AG04450 (cell line): ENCODE measurements at regions of chr4 and their contacts with region 1.

Region 1: DNA sequence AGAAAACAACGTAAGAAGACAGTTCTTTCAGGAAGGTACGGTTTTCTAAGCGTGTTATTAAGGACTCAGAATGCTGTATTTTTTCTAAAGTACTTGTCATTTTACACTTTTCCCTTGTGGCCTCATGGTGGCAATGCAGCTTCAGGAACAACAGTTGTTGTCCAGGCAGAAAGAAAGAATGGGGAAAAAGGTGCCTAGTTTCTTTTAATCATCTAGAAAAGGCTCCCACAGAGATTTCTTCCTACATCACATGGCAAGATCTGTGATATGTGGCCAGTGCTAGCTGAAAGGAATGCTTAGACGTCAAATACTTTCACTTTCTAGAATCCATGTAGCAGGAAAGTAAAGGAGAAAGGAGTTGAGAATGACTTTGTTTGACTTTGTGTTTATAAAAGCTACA is 49.0 kb upstream of the TRAM1L1 start:
- DNase-seq: peak; percentile 60
- H3K4me3 ChIP-seq: no peak overlapping the region; the same call in 1 of the 2 replicates
- H3K27ac ChIP-seq: no peak overlapping the region
- H3K27me3 ChIP-seq: no peaks in the 10 kb centered on the region
- CTCF ChIP-seq: peak; percentile 70

Region 2: GRCh38 chr4:117264072-117264471 is 129.7 kb after region 1 on chr4:
- CTCF ChIA-PET with region 1: no interaction called
- POLR2A ChIA-PET with region 1: no interaction called
- DNase-seq: no peak
- H3K4me3 ChIP-seq: no peak overlapping the region
- H3K27ac ChIP-seq: no peak overlapping the region
- H3K27me3 ChIP-seq: no peaks in the 10 kb centered on the region
- CTCF ChIP-seq: no peak

Region 3: GRCh38 chr4:117560329-117560728 is 425.9 kb after region 1 on chr4:
- CTCF ChIA-PET with region 1: interaction called, 24 read pairs
- POLR2A ChIA-PET with region 1: no interaction called
- DNase-seq: peak; percentile 8
- H3K4me3 ChIP-seq: no peak overlapping the region
- H3K27ac ChIP-seq: no peak overlapping the region
- H3K27me3 ChIP-seq: no peaks in the 10 kb centered on the region
- CTCF ChIP-seq: peak; percentile 28; the same call in 1 of the 2 replicates

Region 4: DNA sequence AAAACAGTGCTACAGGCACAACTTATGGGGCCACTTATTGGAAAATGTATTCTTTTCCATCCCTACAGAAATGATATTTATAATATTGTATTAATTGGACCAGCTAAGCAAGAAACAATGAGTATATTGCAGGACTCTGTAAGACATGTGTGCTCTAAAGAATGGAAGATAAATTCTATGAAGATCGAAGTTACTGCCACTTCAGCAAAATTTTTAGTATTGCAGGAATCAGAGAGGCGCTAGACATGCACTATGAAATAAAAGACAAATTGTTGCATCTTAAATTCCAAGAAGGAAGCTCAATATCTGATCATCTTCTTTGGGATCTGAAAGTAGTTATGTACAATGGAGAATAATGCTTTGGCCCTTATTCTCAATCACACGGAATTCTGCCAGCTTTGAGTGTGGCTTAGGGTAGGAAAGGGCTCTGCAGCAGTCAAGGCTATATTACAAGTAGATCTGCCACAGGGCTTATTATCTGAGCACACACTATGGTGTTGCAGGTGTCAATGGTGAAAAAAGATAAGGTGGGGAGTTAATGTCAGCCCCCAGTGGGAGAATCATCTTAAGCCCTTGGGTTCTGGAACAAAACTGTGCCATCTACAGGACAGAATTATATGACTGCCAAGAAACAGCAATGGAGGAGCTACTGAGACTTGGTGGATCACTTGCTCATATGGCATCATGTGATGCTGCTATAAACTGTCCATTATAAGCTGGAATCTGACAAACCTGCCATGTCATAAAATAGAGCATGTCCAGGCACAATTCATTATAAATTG is 565.9 kb after region 1 on chr4:
- CTCF ChIA-PET with region 1: interaction called, 22 read pairs
- POLR2A ChIA-PET with region 1: no interaction called
- DNase-seq: no peak
- H3K4me3 ChIP-seq: no peak overlapping the region
- H3K27ac ChIP-seq: no peak overlapping the region
- H3K27me3 ChIP-seq: no peaks in the 10 kb centered on the region
- CTCF ChIP-seq: peak; percentile 35